Breast epithelium (tissue), 4 donors: ENCODE measurements at regions of chr7 and their contacts with region 1.

Region 1: GRCh38 chr7:29479301-29480200 is 84.1 kb upstream of the PRR15 start:
- DNase-seq: no peak
- H3K4me3 ChIP-seq: no peak overlapping the region
- H3K27ac ChIP-seq: peak overlapping the region in 1 of 2 donors; percentile 10
- H3K4me1 ChIP-seq: no peaks in the 10 kb centered on the region
- H3K27me3 ChIP-seq: no peaks in the 10 kb centered on the region
- CTCF ChIP-seq: no peak
- POLR2A ChIP-seq: no peak

Region 2: DNA sequence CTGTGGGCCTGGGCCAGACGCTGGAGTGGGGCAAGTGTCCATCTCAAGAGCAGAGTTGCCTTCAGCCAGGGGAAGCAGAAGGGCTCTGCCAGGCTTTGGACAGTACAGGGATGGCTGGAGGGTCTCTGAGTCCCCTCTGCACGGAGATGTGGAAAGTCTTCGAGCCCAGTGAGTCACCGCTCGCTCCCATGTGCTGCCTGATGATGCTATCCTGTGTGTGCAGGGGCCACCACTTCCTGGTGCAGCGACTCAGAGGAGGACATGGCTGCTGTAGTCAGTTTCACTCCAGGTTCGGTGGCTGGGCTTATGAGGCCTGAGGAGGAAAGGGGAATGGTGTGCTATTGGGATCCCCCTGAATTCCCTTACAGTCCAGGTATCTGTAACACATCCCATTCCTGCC is 1578.6 kb after region 1 on chr7:
- intact Hi-C with region 1: loop called (anchors 5 kb)
- DNase-seq: no peak
- H3K4me3 ChIP-seq: no peak overlapping the region
- H3K27ac ChIP-seq: no peak overlapping the region
- H3K4me1 ChIP-seq: no peaks in the 10 kb centered on the region
- H3K27me3 ChIP-seq: peaks cover 0 to 12% of the 10 kb centered on the region in 2 donors
- CTCF ChIP-seq: no peak
- POLR2A ChIP-seq: no peak